ENCODE measurements at regions of chr16 and their contacts with region 1.

Region 1: GRCh38 chr16:84511180-84511824 is 6.8 kb upstream of the MEAK7 start:
- DNase-seq: peak; percentile 85
- H3K4me3 ChIP-seq: peak overlapping the region; percentile 23 to 26; a peak in 3 of 4 replicates
- H3K27ac ChIP-seq: no peak overlapping the region
- H3K4me1 ChIP-seq: peaks cover 0 to 8% of the 10 kb centered on the region in 2 experiments; a peak in 1 of 4 replicates
- H3K27me3 ChIP-seq: no peaks in the 10 kb centered on the region
- CTCF ChIP-seq: peak; percentile 95
- EP300 ChIP-seq: no peak
- RAD21 ChIP-seq: peak; percentile 91

Region 2: GRCh38 chr16:84166796-84167695 is 344.3 kb before region 1 on chr16:
- CTCF ChIA-PET with region 1: no interaction called
- POLR2A ChIA-PET with region 1: no interaction called
- DNase-seq: no peak
- H3K4me3 ChIP-seq: no peak overlapping the region
- H3K27ac ChIP-seq: no peak overlapping the region
- H3K4me1 ChIP-seq: no peaks in the 10 kb centered on the region
- H3K27me3 ChIP-seq: peaks cover 46% of the 10 kb centered on the region
- CTCF ChIP-seq: no peak
- EP300 ChIP-seq: no peak
- RAD21 ChIP-seq: no peak

Region 3: GRCh38 chr16:84315394-84315793 is 195.9 kb before region 1 on chr16:
- CTCF ChIA-PET with region 1: no interaction called
- POLR2A ChIA-PET with region 1: no interaction called
- DNase-seq: no peak
- H3K4me3 ChIP-seq: no peak overlapping the region
- H3K27ac ChIP-seq: no peak overlapping the region
- H3K4me1 ChIP-seq: no peaks in the 10 kb centered on the region
- H3K27me3 ChIP-seq: peaks cover 24% of the 10 kb centered on the region; the same call in 1 of the 2 replicates
- CTCF ChIP-seq: no peak
- EP300 ChIP-seq: no peak
- RAD21 ChIP-seq: no peak

Region 4: GRCh38 chr16:84449171-84450140 is 61.8 kb before region 1 on chr16:
- CTCF ChIA-PET with region 1: no interaction called
- POLR2A ChIA-PET with region 1: no interaction called
- DNase-seq: no peak
- H3K4me3 ChIP-seq: no peak overlapping the region
- H3K27ac ChIP-seq: no peak overlapping the region
- H3K4me1 ChIP-seq: peaks cover 0 to 5% of the 10 kb centered on the region in 2 experiments; a peak in 1 of 4 replicates
- H3K27me3 ChIP-seq: no peaks in the 10 kb centered on the region
- CTCF ChIP-seq: no peak
- EP300 ChIP-seq: no peak
- RAD21 ChIP-seq: no peak

Region 5: GRCh38 chr16:84526794-84527503 is 15.6 kb after region 1 on chr16:
- CTCF ChIA-PET with region 1: interaction called, 27 read pairs
- POLR2A ChIA-PET with region 1: interaction called, 4 read pairs
- DNase-seq: no peak
- H3K4me3 ChIP-seq: no peak overlapping the region
- H3K27ac ChIP-seq: no peak overlapping the region
- H3K4me1 ChIP-seq: peaks cover 3 to 7% of the 10 kb centered on the region in 2 experiments; a peak in 2 of 4 replicates
- H3K27me3 ChIP-seq: no peaks in the 10 kb centered on the region
- CTCF ChIP-seq: no peak
- EP300 ChIP-seq: no peak
- RAD21 ChIP-seq: no peak

Region 6: GRCh38 chr16:84633622-84634021 is 122.3 kb after region 1 on chr16:
- CTCF ChIA-PET with region 1: interaction called, 10 read pairs
- POLR2A ChIA-PET with region 1: no interaction called
- DNase-seq: no peak
- H3K4me3 ChIP-seq: no peak overlapping the region
- H3K27ac ChIP-seq: no peak overlapping the region
- H3K4me1 ChIP-seq: no peaks in the 10 kb centered on the region; a peak in 1 of 4 replicates
- H3K27me3 ChIP-seq: no peaks in the 10 kb centered on the region
- CTCF ChIP-seq: no peak
- EP300 ChIP-seq: no peak
- RAD21 ChIP-seq: no peak

Measured in SK-N-SH (cell line).